IMR-90 (cell line): ENCODE measurements at regions of chr18 and their contacts with region 1.

Region 1: DNA sequence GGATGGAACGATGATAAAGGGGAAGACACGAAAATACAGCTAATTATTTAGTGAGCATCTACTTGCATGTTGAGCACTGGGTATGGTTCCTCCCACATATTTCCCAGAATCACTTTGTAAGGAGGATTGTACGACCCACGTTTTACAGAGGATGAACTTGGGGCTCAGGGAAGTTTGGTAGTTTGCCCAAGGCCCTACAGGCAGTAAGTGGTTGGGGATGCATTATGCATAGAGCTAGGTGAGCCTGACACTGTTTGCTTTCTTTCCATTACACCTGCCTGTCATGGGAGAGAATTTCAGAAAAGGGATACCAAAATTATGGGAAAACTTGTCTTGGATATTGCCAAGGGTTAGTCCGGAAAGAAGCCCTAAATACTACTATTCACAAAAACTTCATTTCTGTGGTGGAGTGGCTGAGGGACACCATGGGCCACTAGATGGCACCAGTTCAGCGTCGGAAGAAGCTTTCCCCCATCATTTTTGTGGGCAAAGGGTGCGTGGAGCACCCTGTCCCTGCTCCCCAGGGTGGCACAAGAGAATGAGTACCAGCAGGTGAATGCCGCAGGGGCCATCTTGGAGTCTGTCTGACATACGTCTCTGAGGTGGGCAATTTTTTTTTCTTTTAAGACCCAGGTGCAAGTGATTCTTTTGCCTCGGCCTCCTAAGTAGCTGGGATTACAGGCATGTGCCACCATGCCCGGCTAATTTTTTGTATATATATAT is 23.5 kb upstream of the C18orf32 start:
- DNase-seq: peak; percentile 40
- ATAC-seq: peak; percentile 90
- H3K4me3 ChIP-seq: no peak overlapping the region
- H3K27ac ChIP-seq: no peak overlapping the region
- H3K4me1 ChIP-seq: no peaks in the 10 kb centered on the region
- H3K27me3 ChIP-seq: peaks cover 6% of the 10 kb centered on the region
- CTCF ChIP-seq: peak; percentile 89
- POLR2A ChIP-seq: no peak
- RAD21 ChIP-seq: peak; percentile 89

Region 2: DNA sequence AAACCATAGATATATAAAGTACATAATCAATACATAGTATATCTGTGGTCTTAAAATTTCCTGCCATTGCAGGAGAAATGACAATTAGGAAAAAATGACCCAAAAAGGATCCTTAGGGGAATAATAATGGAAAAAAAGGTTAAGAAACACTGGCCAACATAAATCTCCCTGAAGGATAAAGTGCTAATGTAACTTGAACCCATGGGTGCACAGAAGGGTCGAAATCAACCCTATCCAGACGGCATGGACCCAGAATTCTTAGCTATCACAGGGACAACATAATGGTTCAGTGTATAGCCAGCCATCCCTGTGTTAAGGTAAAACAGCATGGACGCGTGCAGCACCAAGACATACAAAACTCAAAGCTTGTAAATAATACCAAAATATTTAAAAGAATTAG is 200.9 kb before region 1 on chr18:
- CTCF ChIA-PET with region 1: no interaction called
- POLR2A ChIA-PET with region 1: no interaction called
- dilution Hi-C with region 1: no loop called
- in situ Hi-C with region 1: no loop called
- intact Hi-C with region 1: no loop called
- DNase-seq: no peak
- ATAC-seq: no peak
- H3K4me3 ChIP-seq: no peak overlapping the region
- H3K27ac ChIP-seq: no peak overlapping the region
- H3K4me1 ChIP-seq: no peaks in the 10 kb centered on the region
- H3K27me3 ChIP-seq: no peaks in the 10 kb centered on the region
- CTCF ChIP-seq: no peak
- POLR2A ChIP-seq: no peak
- RAD21 ChIP-seq: no peak

Region 3: GRCh38 chr18:49768051-49768391 is 257.5 kb after region 1 on chr18:
- CTCF ChIA-PET with region 1: no interaction called
- POLR2A ChIA-PET with region 1: no interaction called
- dilution Hi-C with region 1: no loop called
- in situ Hi-C with region 1: loop called (anchors 10 kb)
- intact Hi-C with region 1: loop called (anchors 1 kb)
- DNase-seq: peak; percentile 65
- ATAC-seq: 0 out of 2 replicates have a peak, but pooled peaks have one; percentile 52
- H3K4me3 ChIP-seq: no peak overlapping the region
- H3K27ac ChIP-seq: no peak overlapping the region
- H3K4me1 ChIP-seq: peaks cover 5% of the 10 kb centered on the region
- H3K27me3 ChIP-seq: peaks cover 4% of the 10 kb centered on the region
- CTCF ChIP-seq: peak; percentile 71
- POLR2A ChIP-seq: no peak
- RAD21 ChIP-seq: peak; percentile 84

Region 4: DNA sequence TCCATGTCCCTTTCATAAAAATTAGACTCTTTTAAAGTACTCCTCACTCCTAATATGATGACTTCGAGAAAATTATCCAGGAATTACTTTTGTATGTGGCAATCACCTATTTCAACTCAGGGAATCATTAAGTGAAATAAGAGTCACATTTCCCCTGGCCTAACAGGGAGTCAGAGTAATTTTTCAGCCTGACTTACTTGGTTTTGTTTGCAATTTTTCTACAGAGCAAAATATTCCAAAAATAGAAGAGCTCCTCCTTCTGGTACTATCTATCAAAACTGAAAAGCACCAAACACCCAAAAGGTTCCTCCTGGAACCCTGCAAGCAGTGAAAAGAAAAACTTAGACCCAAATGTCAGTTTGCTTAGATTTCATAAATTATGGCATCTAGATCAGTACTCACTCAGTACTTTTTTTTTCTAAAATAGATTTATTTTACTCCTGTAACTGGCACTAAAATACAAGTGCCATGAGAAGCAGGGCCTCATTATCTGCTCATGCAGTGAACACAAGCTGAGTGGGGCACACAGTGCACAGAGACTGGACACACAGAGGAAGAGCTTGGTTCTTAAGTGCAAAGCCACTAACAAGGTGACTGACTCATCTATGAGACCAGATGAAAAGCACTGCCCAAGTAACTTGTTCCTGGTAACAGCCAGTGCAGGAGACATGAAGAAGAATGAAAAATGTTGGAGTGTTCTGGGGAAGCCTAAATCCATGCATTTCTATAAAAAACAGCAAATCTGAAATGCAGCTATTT is 274.1 kb after region 1 on chr18:
- CTCF ChIA-PET with region 1: no interaction called
- POLR2A ChIA-PET with region 1: no interaction called
- dilution Hi-C with region 1: no loop called
- in situ Hi-C with region 1: no loop called
- intact Hi-C with region 1: loop called (anchors 1 kb)
- DNase-seq: peak; percentile 18
- ATAC-seq: no peak
- H3K4me3 ChIP-seq: no peak overlapping the region
- H3K27ac ChIP-seq: no peak overlapping the region
- H3K4me1 ChIP-seq: no peaks in the 10 kb centered on the region; the same call in 1 of the 2 replicates
- H3K27me3 ChIP-seq: no peaks in the 10 kb centered on the region
- CTCF ChIP-seq: 0 out of 2 replicates have a peak, but pooled peaks have one; percentile 21
- POLR2A ChIP-seq: no peak
- RAD21 ChIP-seq: no peak

Region 5: DNA sequence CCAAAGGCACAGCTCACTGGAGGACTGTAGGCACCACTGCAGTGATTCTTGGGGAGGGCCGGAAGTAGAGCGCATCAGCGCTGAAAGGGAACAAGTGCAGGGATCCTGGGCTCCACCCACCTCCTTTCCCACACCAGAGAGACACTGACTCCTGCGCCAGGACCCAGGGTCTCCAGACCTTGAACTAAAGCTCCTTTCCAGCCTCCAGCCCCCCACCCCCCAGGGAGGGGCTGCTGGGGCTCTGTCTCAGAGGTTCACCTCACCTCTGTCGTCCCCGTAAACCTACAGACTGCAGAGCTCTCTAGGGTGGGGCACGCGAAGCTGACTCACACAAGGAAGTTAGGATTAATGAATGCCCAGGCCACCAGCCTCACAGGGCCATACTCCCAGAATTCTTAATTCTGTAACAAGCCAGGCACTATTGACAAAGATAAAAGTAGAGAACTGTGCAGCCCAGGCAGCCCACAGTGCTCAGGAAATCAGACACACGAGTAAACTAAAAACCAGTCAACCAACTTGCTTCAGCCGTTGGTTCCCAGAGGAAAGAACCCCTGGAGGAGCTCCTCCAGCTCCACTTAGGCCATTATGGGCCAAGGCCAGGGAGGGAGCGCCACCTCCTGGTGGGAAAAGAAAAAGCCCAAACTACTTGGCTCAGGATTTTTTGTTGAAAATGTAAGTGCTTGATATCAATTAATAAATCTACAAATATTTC is 347.9 kb after region 1 on chr18:
- CTCF ChIA-PET with region 1: interaction called, 19 read pairs
- POLR2A ChIA-PET with region 1: no interaction called
- dilution Hi-C with region 1: no loop called
- in situ Hi-C with region 1: loop called (anchors 5 kb)
- intact Hi-C with region 1: loop called (anchors 1 kb)
- DNase-seq: peak; percentile 70
- ATAC-seq: peak; percentile 94
- H3K4me3 ChIP-seq: no peak overlapping the region
- H3K27ac ChIP-seq: no peak overlapping the region
- H3K4me1 ChIP-seq: no peaks in the 10 kb centered on the region
- H3K27me3 ChIP-seq: peaks cover 17% of the 10 kb centered on the region
- CTCF ChIP-seq: peak; percentile 99
- POLR2A ChIP-seq: peak; percentile 70
- RAD21 ChIP-seq: peak; percentile 100

Region 6: DNA sequence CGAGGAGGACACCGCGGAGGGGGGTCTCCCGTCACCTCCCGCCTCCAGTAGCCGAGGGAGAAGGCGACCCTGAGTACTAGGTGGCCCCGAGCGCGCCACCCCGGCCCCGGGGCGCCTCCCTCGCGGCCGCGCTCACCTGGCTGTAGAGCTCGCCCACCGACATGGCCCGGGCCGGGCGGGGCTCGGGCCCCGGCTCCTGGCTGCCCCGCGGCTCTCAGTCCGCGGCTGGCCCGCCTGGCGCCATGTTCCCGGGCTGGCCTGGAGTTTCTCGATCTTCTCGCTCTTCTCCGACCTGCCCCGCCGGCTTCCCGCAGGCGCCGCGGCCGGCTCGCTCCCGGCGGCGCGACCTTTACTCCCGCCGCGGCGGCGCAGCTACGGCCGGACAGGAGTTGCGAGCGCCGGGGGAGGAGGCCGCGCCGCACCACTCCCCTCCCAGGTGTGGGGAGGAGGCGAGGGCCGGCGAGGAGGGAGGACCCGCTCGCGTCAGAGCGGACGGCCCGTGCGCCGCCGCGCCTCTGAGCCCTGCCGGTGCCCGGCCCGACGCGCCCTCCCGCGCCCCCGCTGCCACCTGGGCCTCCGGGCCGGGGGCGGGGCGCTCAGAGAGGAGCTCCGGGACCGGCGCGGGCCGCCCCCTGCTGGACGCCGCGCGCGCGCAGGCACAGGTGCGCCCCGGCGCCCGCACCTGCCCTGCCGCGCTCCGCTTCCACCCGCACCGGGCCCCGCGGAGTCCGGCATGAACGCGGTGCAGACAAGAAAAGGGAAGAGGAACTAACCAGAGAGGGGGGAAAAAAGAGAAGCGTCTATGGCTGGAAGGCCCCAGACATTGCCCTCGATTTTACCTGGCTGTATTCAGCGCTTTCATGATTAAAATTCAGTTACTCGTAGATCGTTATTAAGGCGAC is 684.3 kb after region 1 on chr18 and contains the start of gene MYO5B:
- CTCF ChIA-PET with region 1: no interaction called
- POLR2A ChIA-PET with region 1: no interaction called
- dilution Hi-C with region 1: no loop called
- in situ Hi-C with region 1: loop called (anchors 25 kb)
- intact Hi-C with region 1: loop called (anchors 5 kb)
- DNase-seq: no peak
- ATAC-seq: no peak; the same call in 1 of the 2 replicates
- H3K4me3 ChIP-seq: no peak within 1 kb of the TSS
- H3K27ac ChIP-seq: no peak within 1 kb of the TSS
- H3K4me1 ChIP-seq: no peaks in the 10 kb centered on the region
- H3K27me3 ChIP-seq: peaks cover 41% of the 10 kb centered on the region
- CTCF ChIP-seq: no peak
- POLR2A ChIP-seq: no peak
- RAD21 ChIP-seq: no peak
- total RNA-seq, gene MYO5B: 0.54 and 0.56 TPM in 2 replicates

Region 7: GRCh38 chr18:50203801-50204604 is 693.4 kb after region 1 on chr18:
- CTCF ChIA-PET with region 1: interaction called, 3 read pairs
- POLR2A ChIA-PET with region 1: no interaction called
- dilution Hi-C with region 1: no loop called
- in situ Hi-C with region 1: loop called (anchors 25 kb)
- intact Hi-C with region 1: loop called (anchors 5 kb)
- DNase-seq: peak; percentile 9
- ATAC-seq: peak; percentile 53; the same call in 1 of the 2 replicates
- H3K4me3 ChIP-seq: no peak overlapping the region; the same call in 1 of the 2 replicates
- H3K27ac ChIP-seq: no peak overlapping the region
- H3K4me1 ChIP-seq: no peaks in the 10 kb centered on the region; the same call in 1 of the 2 replicates
- H3K27me3 ChIP-seq: peaks cover 9% of the 10 kb centered on the region
- CTCF ChIP-seq: peak; percentile 52
- POLR2A ChIP-seq: no peak
- RAD21 ChIP-seq: peak; percentile 53

Region 8: DNA sequence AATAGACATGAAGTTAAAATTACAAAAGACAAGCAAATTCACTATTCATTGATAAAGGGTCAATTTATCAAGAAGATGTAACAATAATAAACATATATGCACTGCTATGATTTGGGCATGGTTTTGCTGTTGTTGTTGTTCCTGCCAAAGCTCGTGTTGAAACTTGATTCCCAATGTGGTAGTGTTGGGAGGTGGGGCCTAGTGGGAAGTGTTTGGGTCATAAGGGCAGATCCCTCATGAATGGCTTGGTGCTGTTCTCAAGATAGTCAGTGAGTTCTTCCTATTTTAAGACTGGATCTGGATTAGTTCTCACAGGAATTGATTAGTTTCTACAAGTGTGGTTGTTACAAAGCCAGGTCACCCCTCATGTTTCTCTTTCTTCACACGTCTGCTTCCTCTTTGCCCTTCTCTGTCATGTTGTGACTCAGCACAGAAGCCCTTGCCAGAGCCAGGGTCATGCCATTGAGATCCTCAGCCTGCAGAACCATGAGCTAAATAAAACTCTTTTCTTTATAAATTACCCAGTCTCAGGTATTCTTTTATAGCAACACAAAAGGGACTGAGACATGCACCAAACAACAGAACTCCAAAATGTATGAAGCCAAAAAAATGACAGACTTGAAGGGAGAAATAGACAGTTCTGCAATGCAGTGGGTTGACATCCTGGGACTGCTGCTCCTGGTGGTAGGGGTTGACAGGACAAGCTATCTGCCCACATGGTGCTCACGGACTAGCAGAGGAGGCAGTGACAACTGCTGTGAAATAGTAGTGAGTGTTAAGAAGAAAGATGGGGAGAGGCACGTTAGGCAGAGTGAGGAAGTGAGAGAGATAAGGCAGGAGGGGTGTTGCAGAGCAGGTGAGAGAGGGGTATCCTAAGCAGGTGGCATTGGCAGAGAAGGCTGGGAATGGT is 845.7 kb after region 1 on chr18:
- CTCF ChIA-PET with region 1: interaction called, 4 read pairs
- POLR2A ChIA-PET with region 1: no interaction called
- dilution Hi-C with region 1: no loop called
- in situ Hi-C with region 1: no loop called
- intact Hi-C with region 1: loop called (anchors 5 kb)
- DNase-seq: no peak
- ATAC-seq: no peak; the same call in 1 of the 2 replicates
- H3K4me3 ChIP-seq: no peak overlapping the region
- H3K27ac ChIP-seq: no peak overlapping the region
- H3K4me1 ChIP-seq: no peaks in the 10 kb centered on the region
- H3K27me3 ChIP-seq: peaks cover 6% of the 10 kb centered on the region
- CTCF ChIP-seq: no peak
- POLR2A ChIP-seq: no peak
- RAD21 ChIP-seq: no peak